CD4-positive, alpha-beta T cell (primary cell): ENCODE measurements at regions of chr20 and their contacts with region 1.

Region 1: DNA sequence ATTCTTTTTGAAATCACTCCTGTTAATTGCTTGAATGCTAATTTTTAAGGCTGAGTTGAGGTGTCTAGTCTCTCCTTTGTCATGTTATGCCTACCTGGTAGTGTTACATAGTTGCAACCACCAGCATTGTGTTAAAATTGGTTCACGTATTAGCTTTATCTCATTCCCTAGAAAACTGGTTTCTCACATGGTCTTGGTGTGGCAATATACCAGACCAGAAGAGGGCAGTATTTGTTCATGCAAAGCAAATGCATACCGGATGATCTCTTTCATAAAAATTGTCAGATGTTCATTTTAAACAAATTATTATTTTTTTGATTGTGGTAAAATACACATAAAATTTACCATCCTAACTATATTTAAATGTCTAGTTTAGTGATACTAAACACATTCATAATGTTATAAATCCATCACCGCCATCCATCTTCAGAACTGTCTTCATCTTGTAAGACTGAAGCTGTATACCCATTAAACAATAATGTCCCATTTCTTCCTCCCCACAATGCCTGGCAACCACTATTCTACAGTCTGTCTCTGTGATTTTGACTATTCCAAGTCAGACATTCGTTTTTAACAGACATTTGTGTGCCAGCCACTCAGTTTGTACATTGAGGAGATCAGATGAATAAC is 92.8 kb downstream of the ATRN start:
- DNase-seq: peak in 4 of 14 experiments; percentile 7 to 54 (median 44)
- ATAC-seq: no peak
- H3K4me3 ChIP-seq: no peak overlapping the region
- H3K4me3 Mint-ChIP-seq: no peak overlapping the region
- H3K27ac ChIP-seq: no peak overlapping the region
- H3K27ac Mint-ChIP-seq: no peak overlapping the region
- H3K4me1 ChIP-seq: no peaks in the 10 kb centered on the region
- H3K4me1 Mint-ChIP-seq: no peaks in the 10 kb centered on the region
- H3K27me3 ChIP-seq: no peaks in the 10 kb centered on the region
- H3K27me3 Mint-ChIP-seq: no peaks in the 10 kb centered on the region
- CTCF ChIP-seq: peak; percentile 70

Region 2: GRCh38 chr20:3710703-3711483 is 147.2 kb after region 1 on chr20:
- CTCF ChIA-PET with region 1: interaction called, 8 read pairs
- POLR2A ChIA-PET with region 1: no interaction called
- intact Hi-C with region 1: loop called in 1 of 2 experiments (anchors 5 kb)
- DNase-seq: peak; percentile 50 to 82 (median 70)
- ATAC-seq: peak; percentile 61
- H3K4me3 ChIP-seq: no peak overlapping the region
- H3K4me3 Mint-ChIP-seq: no peak overlapping the region
- H3K27ac ChIP-seq: no peak overlapping the region
- H3K27ac Mint-ChIP-seq: no peak overlapping the region
- H3K4me1 ChIP-seq: peaks cover 5% of the 10 kb centered on the region
- H3K4me1 Mint-ChIP-seq: no peaks in the 10 kb centered on the region
- H3K27me3 ChIP-seq: no peaks in the 10 kb centered on the region
- H3K27me3 Mint-ChIP-seq: peaks cover 8% of the 10 kb centered on the region
- CTCF ChIP-seq: peak; percentile 93